ENCODE measurements at regions of chr5 and their contacts with region 1.

Region 1: GRCh38 chr5:42908509-42909488 is 97.1 kb upstream of the SELENOP start:
- DNase-seq: peak; percentile 80 to 96 (median 90)
- ATAC-seq: peak; percentile 94
- H3K4me3 ChIP-seq: peak overlapping the region; percentile 68
- H3K4me3 Mint-ChIP-seq: peak overlapping the region; percentile 93
- H3K27ac ChIP-seq: no peak overlapping the region
- H3K27ac Mint-ChIP-seq: peak overlapping the region; percentile 91
- H3K4me1 ChIP-seq: peaks cover 12% of the 10 kb centered on the region
- H3K4me1 Mint-ChIP-seq: peaks cover 24% of the 10 kb centered on the region
- H3K27me3 ChIP-seq: peaks cover 4 to 16% of the 10 kb centered on the region in 2 experiments
- H3K27me3 Mint-ChIP-seq: peaks cover 15% of the 10 kb centered on the region
- CTCF ChIP-seq: peak; percentile 89

Region 2: DNA sequence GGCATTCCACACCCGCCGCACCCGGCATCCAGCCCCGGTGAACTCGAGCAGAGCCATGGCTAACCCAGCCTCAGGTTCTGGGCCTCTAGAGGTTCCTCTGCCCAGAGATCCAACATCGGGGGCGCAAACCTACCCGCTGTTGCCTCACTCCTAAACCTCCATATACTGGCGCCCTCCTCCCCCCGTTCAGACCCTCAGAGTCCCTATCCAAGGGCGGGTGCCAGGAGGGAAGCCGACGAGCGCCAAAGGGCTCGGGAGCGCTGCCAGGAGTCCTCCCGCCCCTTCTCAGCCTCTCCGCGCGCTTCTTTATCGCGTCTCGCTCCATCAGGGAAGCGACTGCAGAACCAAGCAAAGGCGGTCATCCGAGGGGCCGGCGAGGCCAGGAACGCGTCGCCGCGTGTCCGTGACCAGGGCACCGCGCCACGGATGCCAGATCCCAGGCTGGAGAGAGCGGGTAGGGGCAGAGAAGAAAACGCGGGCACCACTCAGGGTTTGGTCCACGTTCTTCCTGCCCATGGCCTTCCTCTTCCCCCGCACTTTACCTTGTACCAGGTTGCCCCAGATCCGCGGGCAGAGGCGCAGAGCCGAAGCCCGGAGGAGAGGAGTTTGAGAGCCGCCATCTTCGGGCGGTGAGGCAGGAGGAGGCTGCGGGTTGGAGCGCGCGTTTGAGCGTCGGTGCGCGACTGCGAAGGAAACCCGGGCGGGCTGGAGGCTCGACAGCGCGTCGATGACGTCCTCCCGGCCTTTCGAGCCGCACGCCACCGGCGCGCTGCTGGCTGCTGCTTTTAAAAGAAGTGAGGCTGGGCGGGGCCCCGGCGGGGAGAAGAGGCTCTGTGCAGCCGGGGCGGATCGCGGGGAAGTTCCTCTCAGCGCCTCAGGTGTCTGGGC is 1038.8 kb before region 1 on chr5 and contains the start of gene OXCT1:
- CTCF ChIA-PET with region 1: no interaction called
- POLR2A ChIA-PET with region 1: interaction called, 3 read pairs
- intact Hi-C with region 1: loop called in 1 of 2 experiments (anchors 5 kb)
- DNase-seq: peak; percentile 91 to 98 (median 93)
- ATAC-seq: peak; percentile 92
- H3K4me3 ChIP-seq: peak within 1 kb of the TSS; percentile 81
- H3K4me3 Mint-ChIP-seq: peak within 1 kb of the TSS; percentile 92
- H3K27ac ChIP-seq: peak within 1 kb of the TSS; percentile 88
- H3K27ac Mint-ChIP-seq: peak within 1 kb of the TSS; percentile 95
- H3K4me1 ChIP-seq: peaks cover 30% of the 10 kb centered on the region
- H3K4me1 Mint-ChIP-seq: peaks cover 69% of the 10 kb centered on the region
- H3K27me3 ChIP-seq: no peaks in the 10 kb centered on the region
- H3K27me3 Mint-ChIP-seq: no peaks in the 10 kb centered on the region
- CTCF ChIP-seq: no peak
- total RNA-seq, gene OXCT1: 14.7 to 15.3 TPM

Region 3: DNA sequence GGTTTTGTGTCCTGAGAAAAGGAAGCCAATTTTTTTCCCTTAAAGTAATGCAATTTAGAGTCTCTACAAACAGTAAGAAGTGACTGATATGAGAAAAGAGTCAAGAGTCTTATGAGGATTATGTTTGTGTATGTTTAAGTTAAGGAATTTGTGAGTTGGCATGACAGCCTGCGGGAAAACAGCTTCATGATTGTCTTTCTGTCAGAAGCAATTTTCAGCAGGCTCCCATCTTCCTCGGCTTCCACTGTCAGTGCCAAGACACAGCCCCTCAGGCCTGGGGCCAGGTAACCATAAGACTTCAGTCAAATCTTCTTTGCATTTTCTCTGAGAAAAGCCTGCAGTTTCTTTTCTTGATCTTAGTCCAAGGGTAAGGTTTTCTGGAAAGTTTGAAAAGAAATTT is 80.1 kb before region 1 on chr5:
- CTCF ChIA-PET with region 1: no interaction called
- POLR2A ChIA-PET with region 1: no interaction called
- intact Hi-C with region 1: no loop called
- DNase-seq: no peak
- ATAC-seq: no peak
- H3K4me3 ChIP-seq: no peak overlapping the region
- H3K4me3 Mint-ChIP-seq: no peak overlapping the region
- H3K27ac ChIP-seq: no peak overlapping the region
- H3K27ac Mint-ChIP-seq: no peak overlapping the region
- H3K4me1 ChIP-seq: no peaks in the 10 kb centered on the region
- H3K4me1 Mint-ChIP-seq: no peaks in the 10 kb centered on the region
- H3K27me3 ChIP-seq: peaks cover 0 to 4% of the 10 kb centered on the region in 2 experiments
- H3K27me3 Mint-ChIP-seq: peaks cover 15% of the 10 kb centered on the region
- CTCF ChIP-seq: no peak

Region 4: DNA sequence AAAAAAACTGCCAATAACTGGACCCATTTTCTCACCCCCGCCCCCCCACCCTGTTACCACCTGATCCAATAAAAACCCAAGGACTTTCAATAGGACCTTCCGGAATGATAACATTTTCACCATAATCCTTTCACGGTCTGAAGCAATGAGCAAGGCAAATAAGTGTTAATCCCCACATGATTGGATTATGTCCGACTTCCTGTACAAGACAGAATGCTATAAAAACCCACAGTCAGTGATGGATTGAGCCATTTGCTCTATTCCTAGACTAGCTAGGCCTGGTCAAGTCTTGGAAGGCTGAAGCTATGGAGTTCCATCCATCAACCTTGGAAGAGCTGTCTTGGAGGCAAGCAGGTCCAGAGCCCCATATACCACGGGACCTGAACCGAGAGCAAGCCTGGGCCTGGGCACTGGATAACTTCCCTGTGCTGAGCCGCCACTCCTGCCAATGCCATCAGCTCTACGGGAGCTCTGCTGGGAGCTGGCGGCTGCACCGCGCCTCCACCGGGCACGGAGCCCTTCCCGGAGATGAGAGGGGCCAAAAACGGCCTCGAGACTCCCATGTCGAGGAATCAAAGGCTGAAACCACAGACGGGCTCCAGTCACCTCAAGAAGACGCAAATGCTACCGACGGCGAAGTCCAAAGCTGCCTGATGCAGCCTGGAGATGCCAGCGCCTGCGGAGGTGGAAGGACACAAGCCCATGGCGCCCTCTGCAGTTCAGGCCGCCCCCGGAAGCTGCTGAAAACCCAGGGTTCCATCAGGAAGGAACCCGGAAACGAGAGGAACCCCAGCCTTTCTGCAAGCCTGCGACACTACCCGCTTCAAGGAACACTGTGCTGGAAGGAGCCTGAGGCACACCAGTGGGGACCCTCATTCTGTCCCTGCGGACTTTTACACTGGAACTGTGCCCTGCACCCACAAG is 62.1 kb after region 1 on chr5:
- CTCF ChIA-PET with region 1: interaction called, 12 read pairs
- POLR2A ChIA-PET with region 1: no interaction called
- intact Hi-C with region 1: no loop called
- DNase-seq: peak in 2 of 14 experiments; percentile 37 to 49
- ATAC-seq: no peak
- H3K4me3 ChIP-seq: no peak overlapping the region
- H3K4me3 Mint-ChIP-seq: no peak overlapping the region
- H3K27ac ChIP-seq: no peak overlapping the region
- H3K27ac Mint-ChIP-seq: no peak overlapping the region
- H3K4me1 ChIP-seq: peaks cover 4% of the 10 kb centered on the region
- H3K4me1 Mint-ChIP-seq: peaks cover 6% of the 10 kb centered on the region
- H3K27me3 ChIP-seq: no peaks in the 10 kb centered on the region
- H3K27me3 Mint-ChIP-seq: no peaks in the 10 kb centered on the region
- CTCF ChIP-seq: peak; percentile 27

Region 5: DNA sequence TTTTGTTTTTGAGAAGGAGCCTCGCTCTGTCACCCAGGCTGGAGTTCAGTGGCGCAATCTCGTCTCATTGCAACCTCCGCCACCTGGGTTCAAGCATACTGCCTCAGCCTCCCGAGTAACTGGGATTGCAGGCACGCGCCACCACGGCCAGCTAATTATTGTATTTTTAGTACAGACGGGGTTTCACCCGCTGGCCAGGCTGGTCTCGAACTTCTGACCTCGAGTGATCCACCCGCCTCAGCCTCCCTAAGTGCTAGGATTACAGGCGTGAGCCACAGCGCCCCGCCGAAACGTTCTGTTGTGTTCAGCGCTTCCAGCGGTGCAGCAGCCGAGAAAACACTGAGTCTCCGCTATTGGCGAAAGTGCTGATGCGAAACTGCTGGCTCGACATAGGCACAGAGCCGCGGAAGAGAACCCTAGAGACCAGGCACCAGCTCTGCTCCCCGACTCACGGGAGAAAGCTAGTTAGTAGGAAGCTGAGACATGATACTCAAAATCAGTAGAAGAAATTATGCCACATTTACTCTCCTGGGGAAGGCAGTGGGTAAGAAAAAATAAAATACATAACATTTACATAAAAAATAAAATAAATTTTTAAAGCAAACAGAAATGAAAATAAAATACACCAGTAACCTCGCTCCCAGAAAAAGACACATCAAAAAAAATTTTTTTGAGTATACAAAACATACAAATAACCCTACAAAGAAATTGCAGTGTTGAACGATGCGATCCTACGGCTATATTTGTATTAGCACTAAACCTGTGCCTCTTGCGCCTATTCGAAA is 99.8 kb after region 1 on chr5:
- CTCF ChIA-PET with region 1: interaction called, 10 read pairs
- POLR2A ChIA-PET with region 1: interaction called, 106 read pairs
- intact Hi-C with region 1: loop called in 1 of 2 experiments (anchors 2 kb)
- DNase-seq: peak; percentile 87 to 97 (median 92)
- ATAC-seq: peak; percentile 63
- H3K4me3 ChIP-seq: peak overlapping the region; percentile 82
- H3K4me3 Mint-ChIP-seq: peak overlapping the region; percentile 92
- H3K27ac ChIP-seq: peak overlapping the region; percentile 91 to 95
- H3K27ac Mint-ChIP-seq: peak overlapping the region; percentile 95
- H3K4me1 ChIP-seq: peaks cover 36% of the 10 kb centered on the region
- H3K4me1 Mint-ChIP-seq: peaks cover 42% of the 10 kb centered on the region
- H3K27me3 ChIP-seq: no peaks in the 10 kb centered on the region
- H3K27me3 Mint-ChIP-seq: no peaks in the 10 kb centered on the region
- CTCF ChIP-seq: no peak

Region 6: GRCh38 chr5:43040287-43041098 is 131.7 kb after region 1 on chr5 and contains the start of gene ANXA2R:
- CTCF ChIA-PET with region 1: interaction called, 27 read pairs
- POLR2A ChIA-PET with region 1: interaction called, 136 read pairs
- intact Hi-C with region 1: loop called (anchors 1 to 2 kb)
- DNase-seq: peak; percentile 90 to 98 (median 93)
- ATAC-seq: peak; percentile 53
- H3K4me3 ChIP-seq: peak within 1 kb of the TSS; percentile 84
- H3K4me3 Mint-ChIP-seq: peak within 1 kb of the TSS; percentile 98
- H3K27ac ChIP-seq: peak within 1 kb of the TSS; percentile 96 to 98
- H3K27ac Mint-ChIP-seq: peak within 1 kb of the TSS; percentile 98
- H3K4me1 ChIP-seq: peaks cover 73% of the 10 kb centered on the region
- H3K4me1 Mint-ChIP-seq: peaks cover 46% of the 10 kb centered on the region
- H3K27me3 ChIP-seq: no peaks in the 10 kb centered on the region
- H3K27me3 Mint-ChIP-seq: no peaks in the 10 kb centered on the region
- CTCF ChIP-seq: peak; percentile 86
- total RNA-seq, gene ANXA2R: 45.6 to 48.9 TPM

Region 7: DNA sequence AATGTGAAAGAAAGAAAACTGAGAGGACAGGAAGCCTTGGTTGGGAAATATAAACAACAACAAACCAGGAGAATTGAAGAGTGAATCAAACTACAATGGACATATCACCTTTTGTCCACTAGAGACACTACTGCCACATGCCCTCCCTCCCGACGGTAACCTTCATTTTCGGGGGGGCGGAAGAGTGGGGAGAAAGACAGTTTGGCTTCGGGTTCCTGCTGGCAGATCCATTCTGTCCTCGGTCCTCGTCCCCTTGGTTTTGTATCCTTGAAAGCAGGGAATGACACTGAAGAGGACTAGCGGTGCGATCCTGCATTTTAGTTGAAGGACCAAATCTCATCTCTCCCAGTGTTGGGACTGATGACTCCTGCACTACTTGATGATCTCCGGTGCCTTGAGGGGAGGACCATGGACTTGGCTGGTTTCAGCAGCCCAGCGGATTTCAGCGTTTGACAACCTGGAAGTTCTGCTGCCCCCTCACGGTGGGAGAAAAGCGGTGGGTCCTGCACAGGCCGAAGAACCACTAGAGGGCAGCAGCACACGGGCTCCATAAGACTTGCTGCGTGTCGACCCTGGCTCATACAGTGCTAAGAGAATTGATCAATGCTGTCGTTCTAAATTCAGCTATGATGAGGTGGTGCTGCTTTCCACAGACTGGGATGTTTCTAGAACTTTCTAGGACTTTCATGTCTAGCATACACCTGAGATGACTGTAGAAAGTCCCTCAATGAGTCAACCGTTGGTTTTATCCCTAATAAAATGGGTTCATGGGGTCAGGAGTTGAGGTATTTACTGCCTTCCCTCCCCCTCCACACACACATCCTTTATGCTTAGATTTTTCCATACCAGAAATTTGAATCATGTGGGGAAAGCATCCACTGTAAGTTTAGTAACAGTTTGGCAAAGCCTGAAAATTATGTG is 196.8 kb after region 1 on chr5:
- CTCF ChIA-PET with region 1: interaction called, 19 read pairs
- POLR2A ChIA-PET with region 1: interaction called, 7 read pairs
- intact Hi-C with region 1: loop called (anchors 1 to 2 kb)
- DNase-seq: peak; percentile 85 to 97 (median 88)
- ATAC-seq: peak; percentile 90
- H3K4me3 ChIP-seq: peak overlapping the region; percentile 51
- H3K4me3 Mint-ChIP-seq: peak overlapping the region; percentile 91
- H3K27ac ChIP-seq: no peak overlapping the region
- H3K27ac Mint-ChIP-seq: peak overlapping the region; percentile 78
- H3K4me1 ChIP-seq: peaks cover 36% of the 10 kb centered on the region
- H3K4me1 Mint-ChIP-seq: peaks cover 41% of the 10 kb centered on the region
- H3K27me3 ChIP-seq: no peaks in the 10 kb centered on the region
- H3K27me3 Mint-ChIP-seq: no peaks in the 10 kb centered on the region
- CTCF ChIP-seq: peak; percentile 100

Region 8: DNA sequence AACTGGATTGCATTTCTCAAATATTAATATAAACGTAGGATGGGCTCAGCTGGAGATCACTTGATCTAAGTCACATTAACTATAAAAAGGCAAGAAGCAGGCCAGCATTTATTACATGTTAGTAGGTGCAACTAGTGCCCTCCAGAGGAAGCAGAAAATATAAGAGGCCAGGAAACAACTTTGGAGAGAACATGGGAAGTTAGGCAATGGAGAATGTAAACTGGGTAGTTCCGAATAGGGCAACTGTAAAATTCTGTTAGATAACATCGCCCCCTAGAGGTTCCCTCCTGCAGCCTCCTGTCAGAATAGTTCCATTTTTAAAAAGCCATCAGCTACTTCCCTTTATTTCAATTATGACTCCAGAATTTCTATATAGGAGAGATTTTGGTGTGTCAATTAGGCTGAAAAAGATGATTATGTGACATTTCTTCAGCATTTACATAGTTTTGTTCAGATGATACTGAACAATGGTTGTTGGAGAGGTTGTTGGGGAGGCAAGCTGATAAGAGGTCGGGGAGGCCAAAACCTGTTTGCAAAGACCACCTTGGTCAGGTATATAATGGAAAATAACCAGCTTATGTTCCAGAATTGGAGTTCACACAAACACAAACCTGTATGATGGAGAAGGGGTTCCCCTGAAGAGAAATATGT is 481.0 kb after region 1 on chr5:
- CTCF ChIA-PET with region 1: interaction called, 3 read pairs
- POLR2A ChIA-PET with region 1: interaction called, 4 read pairs
- intact Hi-C with region 1: loop called (anchors 5 kb)
- DNase-seq: peak in 12 of 14 experiments; percentile 6 to 79 (median 18)
- ATAC-seq: peak; percentile 82
- H3K4me3 ChIP-seq: no peak overlapping the region
- H3K4me3 Mint-ChIP-seq: no peak overlapping the region
- H3K27ac ChIP-seq: no peak overlapping the region
- H3K27ac Mint-ChIP-seq: peak overlapping the region; percentile 28
- H3K4me1 ChIP-seq: no peaks in the 10 kb centered on the region
- H3K4me1 Mint-ChIP-seq: peaks cover 27% of the 10 kb centered on the region
- H3K27me3 ChIP-seq: no peaks in the 10 kb centered on the region
- H3K27me3 Mint-ChIP-seq: no peaks in the 10 kb centered on the region
- CTCF ChIP-seq: peak; percentile 85

Region 9: DNA sequence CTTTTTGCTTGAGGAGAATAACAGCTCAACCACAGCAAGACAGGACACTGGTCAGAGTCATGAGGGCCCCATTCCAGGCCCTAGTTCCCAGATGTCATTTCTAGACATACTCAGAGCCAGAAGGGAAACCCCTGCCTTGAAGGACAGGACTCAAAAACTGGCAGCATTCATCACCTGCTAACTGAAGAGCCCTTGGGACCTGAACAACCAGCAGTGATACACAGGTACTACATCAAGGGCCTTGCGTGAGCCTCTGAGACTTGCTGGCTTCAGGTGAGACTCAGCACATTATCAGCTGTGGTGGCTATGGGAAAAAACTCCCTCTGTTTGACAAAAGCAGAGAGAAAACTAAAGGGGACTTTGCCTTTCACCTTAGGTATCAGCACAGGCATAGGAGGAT is 552.3 kb after region 1 on chr5:
- CTCF ChIA-PET with region 1: no interaction called
- POLR2A ChIA-PET with region 1: no interaction called
- intact Hi-C with region 1: no loop called
- DNase-seq: no peak
- ATAC-seq: no peak
- H3K4me3 ChIP-seq: no peak overlapping the region
- H3K4me3 Mint-ChIP-seq: no peak overlapping the region
- H3K27ac ChIP-seq: no peak overlapping the region
- H3K27ac Mint-ChIP-seq: no peak overlapping the region
- H3K4me1 ChIP-seq: no peaks in the 10 kb centered on the region
- H3K4me1 Mint-ChIP-seq: no peaks in the 10 kb centered on the region
- H3K27me3 ChIP-seq: no peaks in the 10 kb centered on the region
- H3K27me3 Mint-ChIP-seq: no peaks in the 10 kb centered on the region
- CTCF ChIP-seq: no peak